ENCODE measurements at regions of chr7 and their contacts with region 1.

Region 1: GRCh38 chr7:101900103-101900502 is 82.7 kb downstream of the CUX1 start:
- DNase-seq: no peak
- H3K4me3 ChIP-seq: no peak overlapping the region
- H3K27ac ChIP-seq: no peak overlapping the region
- H3K4me1 ChIP-seq: peaks cover 7% of the 10 kb centered on the region
- H3K27me3 ChIP-seq: no peaks in the 10 kb centered on the region
- CTCF ChIP-seq: no peak
- EP300 ChIP-seq: no peak
- POLR2A ChIP-seq: no peak

Region 2: GRCh38 chr7:101474178-101474577 is 425.9 kb before region 1 on chr7:
- intact Hi-C with region 1: no loop called
- DNase-seq: no peak
- H3K4me3 ChIP-seq: no peak overlapping the region
- H3K27ac ChIP-seq: no peak overlapping the region
- H3K4me1 ChIP-seq: no peaks in the 10 kb centered on the region
- H3K27me3 ChIP-seq: no peaks in the 10 kb centered on the region
- CTCF ChIP-seq: no peak
- EP300 ChIP-seq: no peak
- POLR2A ChIP-seq: no peak

Region 3: DNA sequence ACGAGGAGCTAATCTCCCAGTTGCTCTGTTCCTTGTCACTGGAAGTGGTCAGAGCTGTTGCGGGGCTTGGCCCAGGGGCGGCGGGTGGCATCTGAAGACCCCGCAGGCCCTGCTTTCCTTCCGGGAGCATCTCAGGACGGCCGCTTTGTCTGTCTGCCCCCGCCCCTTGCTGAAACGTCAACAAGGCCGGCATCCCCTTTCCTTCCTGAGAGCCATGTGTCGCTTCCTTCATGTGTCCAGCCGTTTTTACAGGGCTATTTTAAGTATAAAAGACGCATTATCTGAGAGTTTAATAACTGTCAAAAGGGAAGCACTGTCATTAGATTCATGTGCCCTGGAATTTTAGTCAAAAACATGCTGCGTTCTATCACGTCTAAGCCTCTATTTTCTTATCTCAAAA is 27.7 kb after region 1 on chr7:
- intact Hi-C with region 1: loop called in 1 of 4 experiments (anchors 2 kb)
- DNase-seq: peak in 1 of 5 donors; percentile 29
- H3K4me3 ChIP-seq: no peak overlapping the region
- H3K27ac ChIP-seq: no peak overlapping the region
- H3K4me1 ChIP-seq: peaks cover 2% of the 10 kb centered on the region
- H3K27me3 ChIP-seq: no peaks in the 10 kb centered on the region
- CTCF ChIP-seq: no peak
- EP300 ChIP-seq: no peak
- POLR2A ChIP-seq: no peak

Measured in ovary (tissue), 10 donors.